H1 (cell line): ENCODE measurements at regions of chr19 and their contacts with region 1.

Region 1: GRCh38 chr19:42184401-42184861 is 33.0 kb downstream of the DEDD2 start:
- DNase-seq: peak; percentile 79 to 97
- H3K4me3 ChIP-seq: no peak overlapping the region
- H3K27ac ChIP-seq: no peak overlapping the region
- H3K4me1 ChIP-seq: peaks cover 0 to 7% (median 3%) of the 10 kb centered on the region in 4 experiments; a peak in 3 of 7 replicates
- H3K27me3 ChIP-seq: peaks cover 5 to 23% (median 15%) of the 10 kb centered on the region in 4 experiments
- CTCF ChIP-seq: peak; percentile 95 to 98 (median 96)
- EP300 ChIP-seq: no peak
- POLR2A ChIP-seq: no peak
- RAD21 ChIP-seq: peak; percentile 94 to 96

Region 2: DNA sequence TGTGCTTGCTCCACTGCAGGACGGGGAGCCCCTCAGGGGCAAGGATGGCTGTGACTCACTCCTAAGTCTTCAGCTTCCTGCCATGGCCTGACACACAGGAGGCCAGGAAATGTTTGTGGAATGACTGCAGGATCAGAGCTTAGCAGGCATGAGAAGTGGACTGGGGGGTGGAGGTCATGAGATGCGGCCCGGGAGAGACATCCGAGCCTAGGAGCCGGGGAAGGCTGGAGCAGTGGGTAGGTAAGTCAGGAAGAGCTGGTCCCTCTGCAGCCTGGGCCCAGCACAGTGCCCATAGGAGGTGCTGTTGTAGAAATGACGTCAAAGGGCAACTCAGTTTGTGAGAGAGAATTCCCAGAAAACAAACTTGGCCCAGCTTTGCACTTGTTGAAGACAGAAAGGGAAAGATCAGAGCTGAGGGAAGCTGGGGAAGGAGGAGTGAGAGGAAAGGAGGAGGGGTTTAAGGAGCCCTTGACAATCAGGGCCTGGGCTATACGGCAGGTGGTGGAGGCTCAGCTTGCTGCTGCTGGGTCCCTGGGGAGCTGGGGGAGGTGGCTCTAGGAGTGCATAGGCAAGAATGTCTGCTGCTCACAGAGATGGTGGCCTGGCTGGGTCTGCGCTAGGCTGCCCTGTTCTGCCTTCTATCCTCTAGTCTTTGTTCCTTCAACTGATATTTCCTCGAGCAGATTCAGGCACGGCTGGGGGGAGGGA is 70.6 kb before region 1 on chr19:
- CTCF ChIA-PET with region 1: interaction called, 28 read pairs
- POLR2A ChIA-PET with region 1: no interaction called
- DNase-seq: peak in 1 of 2 experiments; percentile 56
- H3K4me3 ChIP-seq: no peak overlapping the region
- H3K27ac ChIP-seq: no peak overlapping the region
- H3K4me1 ChIP-seq: peaks cover 8 to 17% (median 10%) of the 10 kb centered on the region in 4 experiments
- H3K27me3 ChIP-seq: no peaks in the 10 kb centered on the region
- CTCF ChIP-seq: peak; percentile 26 to 64 (median 62); a peak in 3 of 4 replicates
- EP300 ChIP-seq: no peak
- POLR2A ChIP-seq: no peak
- RAD21 ChIP-seq: 0 out of 4 replicates have a peak, but pooled peaks of 1 of the 2 experiments have one; percentile 11

Region 3: DNA sequence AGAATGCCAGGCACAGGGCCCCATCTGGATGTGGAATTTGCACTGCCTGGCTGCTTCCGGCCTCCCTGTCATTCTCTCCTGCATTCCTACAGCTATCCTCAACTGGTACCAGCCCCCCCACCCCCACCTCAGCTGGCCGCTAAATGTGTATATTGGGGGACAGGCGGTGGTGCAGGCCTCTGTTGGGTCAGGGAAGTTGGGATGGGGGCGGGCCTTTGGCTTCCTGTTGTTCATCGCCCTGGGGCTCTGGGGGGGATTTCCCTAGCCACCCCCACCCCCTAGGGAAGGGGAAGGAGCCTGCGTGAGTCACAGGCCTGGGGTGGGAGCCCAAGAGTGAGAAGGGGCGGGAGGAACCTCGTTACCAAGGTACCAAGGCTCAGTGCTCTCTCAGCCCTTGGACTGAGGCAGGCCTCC is 62.8 kb before region 1 on chr19:
- CTCF ChIA-PET with region 1: interaction called, 19 read pairs
- POLR2A ChIA-PET with region 1: no interaction called
- DNase-seq: no peak
- H3K4me3 ChIP-seq: no peak overlapping the region
- H3K27ac ChIP-seq: no peak overlapping the region
- H3K4me1 ChIP-seq: peaks cover 0 to 12% (median 8%) of the 10 kb centered on the region in 4 experiments; a peak in 4 of 7 replicates
- H3K27me3 ChIP-seq: no peaks in the 10 kb centered on the region
- CTCF ChIP-seq: no peak
- EP300 ChIP-seq: no peak
- POLR2A ChIP-seq: no peak
- RAD21 ChIP-seq: no peak

Region 4: GRCh38 chr19:42132851-42133528 is 51.4 kb before region 1 on chr19:
- CTCF ChIA-PET with region 1: interaction called, 159 read pairs
- POLR2A ChIA-PET with region 1: interaction called, 5 read pairs
- DNase-seq: peak; percentile 70 to 98
- H3K4me3 ChIP-seq: peak overlapping the region; percentile 24 to 60 (median 52); a peak in 7 of 8 replicates
- H3K27ac ChIP-seq: no peak overlapping the region
- H3K4me1 ChIP-seq: peaks cover 3 to 12% (median 9%) of the 10 kb centered on the region in 4 experiments; a peak in 6 of 7 replicates
- H3K27me3 ChIP-seq: peaks cover 0 to 17% (median 8%) of the 10 kb centered on the region in 4 experiments; a peak in 5 of 7 replicates
- CTCF ChIP-seq: peak; percentile 81 to 97 (median 88)
- EP300 ChIP-seq: peak in 1 of 2 experiments; percentile 35; a peak in 1 of 3 replicates
- POLR2A ChIP-seq: peak in 1 of 2 experiments; percentile 53; a peak in 1 of 3 replicates
- RAD21 ChIP-seq: peak; percentile 98

Region 5: DNA sequence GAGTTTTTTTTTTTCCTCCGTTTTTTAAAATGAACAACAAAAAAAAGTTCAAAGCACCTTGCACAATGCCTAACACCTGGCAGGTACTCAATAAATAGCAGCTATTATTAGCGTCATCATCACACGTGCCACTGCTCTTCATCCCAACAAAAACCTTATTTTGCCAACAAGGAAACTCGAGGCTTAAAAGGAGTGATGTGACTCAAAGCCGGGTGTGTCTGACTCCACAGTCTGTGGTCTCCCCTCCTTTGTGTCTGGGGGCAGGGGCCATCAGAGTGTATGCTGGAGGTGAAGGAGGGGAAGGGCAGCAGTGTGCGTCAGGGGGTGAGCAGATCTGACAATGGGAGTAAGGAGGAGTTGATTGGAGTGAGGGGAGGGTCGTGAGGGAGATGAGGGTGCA is 18.1 kb before region 1 on chr19:
- CTCF ChIA-PET with region 1: interaction called, 15 read pairs
- POLR2A ChIA-PET with region 1: interaction called, 4 read pairs
- DNase-seq: no peak
- H3K4me3 ChIP-seq: no peak overlapping the region
- H3K27ac ChIP-seq: no peak overlapping the region
- H3K4me1 ChIP-seq: no peaks in the 10 kb centered on the region
- H3K27me3 ChIP-seq: no peaks in the 10 kb centered on the region; a peak in 2 of 7 replicates
- CTCF ChIP-seq: no peak
- EP300 ChIP-seq: no peak
- POLR2A ChIP-seq: no peak
- RAD21 ChIP-seq: no peak

Region 6: DNA sequence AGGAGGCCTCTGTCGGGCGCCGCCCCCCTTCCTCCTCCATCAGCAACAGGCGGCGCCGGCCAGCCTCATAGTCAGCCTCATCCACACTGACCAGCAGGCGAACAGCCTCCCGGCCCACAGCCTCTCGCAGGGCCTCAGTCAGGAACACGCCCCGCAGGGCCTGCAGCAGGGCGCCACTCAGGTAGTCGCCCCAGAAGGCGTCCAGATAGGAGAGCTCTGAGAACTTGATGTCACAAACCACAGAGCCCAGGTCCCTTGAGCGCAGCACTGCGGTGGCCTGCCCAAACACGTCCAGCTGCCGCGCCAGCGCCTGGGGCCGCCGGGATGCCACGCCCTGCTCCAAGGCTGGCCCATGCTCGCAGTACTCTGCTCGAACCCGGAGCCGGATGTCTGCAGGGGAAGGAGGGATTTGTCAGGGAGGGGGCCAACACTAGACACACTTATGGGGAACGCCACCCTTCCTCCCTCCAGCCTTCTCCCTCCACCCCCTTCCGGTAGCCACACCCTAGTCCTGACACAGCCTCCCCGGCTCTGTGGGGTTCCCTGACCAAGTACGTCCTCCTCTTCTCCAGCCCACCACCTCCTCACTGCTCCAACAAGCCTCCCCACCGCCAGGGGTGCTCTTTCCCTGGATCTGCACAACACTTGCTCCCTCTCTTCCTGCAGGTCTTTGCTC is 15.1 kb after region 1 on chr19:
- CTCF ChIA-PET with region 1: interaction called, 24 read pairs
- POLR2A ChIA-PET with region 1: interaction called, 3 read pairs
- DNase-seq: no peak
- H3K4me3 ChIP-seq: no peak overlapping the region
- H3K27ac ChIP-seq: peak overlapping the region; percentile 15; the same call in 1 of the 2 replicates
- H3K4me1 ChIP-seq: peaks cover 0 to 30% (median 12%) of the 10 kb centered on the region in 4 experiments; a peak in 6 of 7 replicates
- H3K27me3 ChIP-seq: no peaks in the 10 kb centered on the region
- CTCF ChIP-seq: peak; percentile 46 to 73 (median 62); a peak in 3 of 4 replicates
- EP300 ChIP-seq: no peak
- POLR2A ChIP-seq: no peak
- RAD21 ChIP-seq: peak; percentile 19 to 34; a peak in 2 of 4 replicates

Region 7: GRCh38 chr19:42214810-42215485 is 30.5 kb after region 1 on chr19:
- CTCF ChIA-PET with region 1: no interaction called
- POLR2A ChIA-PET with region 1: no interaction called
- DNase-seq: no peak
- H3K4me3 ChIP-seq: no peak overlapping the region
- H3K27ac ChIP-seq: no peak overlapping the region
- H3K4me1 ChIP-seq: peaks cover 3 to 11% (median 7%) of the 10 kb centered on the region in 4 experiments; a peak in 6 of 7 replicates
- H3K27me3 ChIP-seq: no peaks in the 10 kb centered on the region
- CTCF ChIP-seq: no peak
- EP300 ChIP-seq: no peak
- POLR2A ChIP-seq: no peak
- RAD21 ChIP-seq: no peak

Region 8: DNA sequence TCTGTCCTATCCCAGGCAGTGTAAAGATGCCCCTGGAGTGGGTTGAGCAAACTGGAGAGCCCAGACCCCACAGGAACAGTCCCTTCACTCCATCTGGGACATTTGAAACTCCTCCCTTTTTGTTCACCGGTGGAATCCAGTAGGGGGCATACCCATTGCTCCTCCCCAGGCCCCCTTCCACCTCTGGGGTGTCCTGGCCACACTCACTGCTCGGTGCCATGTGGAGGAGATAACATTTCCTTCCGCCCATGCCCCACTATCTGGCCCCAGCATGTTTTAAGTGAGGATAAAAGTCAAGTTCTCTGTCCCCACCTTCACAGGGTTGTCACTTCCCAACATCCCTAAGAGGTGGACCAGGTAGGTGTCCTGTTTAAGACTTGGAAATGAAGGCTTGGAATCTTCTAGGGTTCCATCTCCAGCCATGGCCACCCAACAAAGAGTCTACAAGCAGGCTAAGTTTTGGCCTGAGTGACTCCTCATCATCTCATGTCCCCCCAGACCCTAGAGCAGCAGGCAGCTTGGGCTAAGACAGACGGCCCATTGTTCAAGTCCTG is 44.9 kb after region 1 on chr19:
- CTCF ChIA-PET with region 1: no interaction called
- POLR2A ChIA-PET with region 1: no interaction called
- DNase-seq: no peak
- H3K4me3 ChIP-seq: no peak overlapping the region
- H3K27ac ChIP-seq: no peak overlapping the region
- H3K4me1 ChIP-seq: no peaks in the 10 kb centered on the region
- H3K27me3 ChIP-seq: no peaks in the 10 kb centered on the region
- CTCF ChIP-seq: no peak
- EP300 ChIP-seq: no peak
- POLR2A ChIP-seq: no peak
- RAD21 ChIP-seq: no peak